Activated T-helper 2 cell treated with anti-CD3 and anti-CD28 coated beads, Interferon-gamma antibody, Interleukin-2, Interleukin-4, amounts not matched to agents 10 μg/mL and 5 μg/mL and 100 μg/mL, durations not matched to agents 14 hours and 24 hours and 36 hours (primary cell): ENCODE measurements at regions of chr2 and their contacts with region 1.

Region 1: GRCh38 chr2:37711308-37711731 is 39.9 kb upstream of the CDC42EP3 start:
- DNase-seq: peak; percentile 46
- H3K4me3 Mint-ChIP-seq: no peak overlapping the region
- H3K27ac Mint-ChIP-seq: no peak overlapping the region
- H3K4me1 Mint-ChIP-seq: peaks cover 49% of the 10 kb centered on the region
- H3K27me3 Mint-ChIP-seq: peaks cover under 1% of the 10 kb centered on the region

Region 2: GRCh38 chr2:37570773-37571586 is 140.3 kb before region 1 on chr2:
- intact Hi-C with region 1: loop called (anchors 5 kb)
- DNase-seq: no peak
- H3K4me3 Mint-ChIP-seq: no peak overlapping the region
- H3K27ac Mint-ChIP-seq: no peak overlapping the region
- H3K4me1 Mint-ChIP-seq: peaks cover 31% of the 10 kb centered on the region
- H3K27me3 Mint-ChIP-seq: peaks cover 8% of the 10 kb centered on the region

Region 3: DNA sequence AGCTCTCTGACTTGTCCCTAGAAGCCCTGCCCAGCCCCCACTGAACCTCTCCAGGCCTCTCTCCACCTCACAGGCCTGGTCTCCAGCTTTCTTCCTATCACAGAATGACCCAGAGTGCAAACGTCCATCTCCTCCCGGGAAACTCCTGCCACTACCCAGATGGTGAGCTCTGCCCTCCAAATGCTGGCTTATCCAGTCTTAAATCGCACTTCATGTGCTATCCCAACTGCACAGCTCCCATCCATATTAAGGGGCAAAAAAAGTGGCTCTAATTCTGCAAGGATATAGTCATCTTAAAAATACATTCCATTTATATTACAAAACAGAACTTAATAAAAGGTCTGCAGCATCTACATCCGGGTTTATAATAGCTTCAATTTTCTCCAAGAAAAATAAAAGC is 31.0 kb after region 1 on chr2:
- intact Hi-C with region 1: no loop called
- DNase-seq: no peak
- H3K4me3 Mint-ChIP-seq: no peak overlapping the region
- H3K27ac Mint-ChIP-seq: no peak overlapping the region
- H3K4me1 Mint-ChIP-seq: no peaks in the 10 kb centered on the region
- H3K27me3 Mint-ChIP-seq: peaks cover 2% of the 10 kb centered on the region